Panc1 (cell line): ENCODE measurements at regions of chr2 and their contacts with region 1.

Region 1: GRCh38 chr2:183359867-183360266 is 235.6 kb downstream of the NUP35 start:
- DNase-seq: no peak
- ATAC-seq: no peak
- H3K4me3 ChIP-seq: no peak overlapping the region
- H3K27ac ChIP-seq: no peak overlapping the region
- H3K4me1 ChIP-seq: no peaks in the 10 kb centered on the region
- H3K27me3 ChIP-seq: no peaks in the 10 kb centered on the region
- CTCF ChIP-seq: no peak

Region 2: GRCh38 chr2:183248866-183249567 is 110.8 kb before region 1 on chr2:
- CTCF ChIA-PET with region 1: no interaction called
- POLR2A ChIA-PET with region 1: no interaction called
- in situ Hi-C with region 1: no loop called
- intact Hi-C with region 1: loop called (anchors 5 kb)
- DNase-seq: peak; percentile 5
- ATAC-seq: peak; percentile 84; the same call in 1 of the 2 replicates
- H3K4me3 ChIP-seq: no peak overlapping the region
- H3K27ac ChIP-seq: no peak overlapping the region
- H3K4me1 ChIP-seq: no peaks in the 10 kb centered on the region
- H3K27me3 ChIP-seq: no peaks in the 10 kb centered on the region
- CTCF ChIP-seq: peak; percentile 55; the same call in 1 of the 2 replicates

Region 3: GRCh38 chr2:184847331-184847730 is 1487.5 kb after region 1 on chr2:
- CTCF ChIA-PET with region 1: no interaction called
- POLR2A ChIA-PET with region 1: no interaction called
- in situ Hi-C with region 1: no loop called
- intact Hi-C with region 1: no loop called
- DNase-seq: no peak
- ATAC-seq: no peak
- H3K4me3 ChIP-seq: no peak overlapping the region
- H3K27ac ChIP-seq: no peak overlapping the region
- H3K4me1 ChIP-seq: no peaks in the 10 kb centered on the region
- H3K27me3 ChIP-seq: no peaks in the 10 kb centered on the region
- CTCF ChIP-seq: no peak